Activated CD4-positive, alpha-beta T cell treated with anti-CD3 and anti-CD28 coated beads for 36 hours (primary cell): ENCODE measurements at regions of chr12 and their contacts with region 1.

Region 1: DNA sequence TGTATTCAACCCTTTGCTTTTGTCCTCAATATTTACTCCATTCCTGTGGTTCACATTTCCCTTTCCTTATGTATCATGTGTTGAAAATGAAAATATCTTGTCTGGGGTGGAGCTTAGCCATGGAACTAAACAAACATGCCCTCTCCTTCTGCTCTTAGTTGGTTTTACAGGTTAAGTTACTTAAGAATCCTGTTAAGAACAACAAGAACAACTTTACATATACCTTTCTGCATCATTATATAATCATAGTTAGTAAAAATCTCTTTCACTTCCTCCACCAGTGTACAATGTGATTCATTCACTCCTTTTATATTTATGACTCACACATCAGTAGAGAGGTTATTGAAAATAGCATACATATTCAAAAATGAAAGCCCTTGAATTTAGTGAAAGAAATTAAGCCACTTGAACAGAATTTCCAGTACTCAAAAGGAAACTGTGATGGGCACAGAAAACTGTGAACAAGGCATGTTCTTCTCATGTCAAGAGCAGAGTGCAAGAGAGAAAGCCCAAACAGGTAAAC is 307.7 kb downstream of the CCDC91 start:
- DNase-seq: peak; percentile 4
- ATAC-seq: peak; percentile 96
- H3K4me3 Mint-ChIP-seq: no peak overlapping the region
- H3K27ac Mint-ChIP-seq: no peak overlapping the region
- H3K4me1 Mint-ChIP-seq: peaks cover 16% of the 10 kb centered on the region
- H3K27me3 Mint-ChIP-seq: no peaks in the 10 kb centered on the region

Region 2: GRCh38 chr12:28223025-28223554 is 274.9 kb before region 1 on chr12:
- CTCF ChIA-PET with region 1: no interaction called
- POLR2A ChIA-PET with region 1: no interaction called
- intact Hi-C with region 1: loop called in 1 of 2 experiments (anchors 5 kb)
- DNase-seq: peak; percentile 25
- ATAC-seq: peak; percentile 94
- H3K4me3 Mint-ChIP-seq: peak overlapping the region; percentile 29
- H3K27ac Mint-ChIP-seq: peak overlapping the region; percentile 77
- H3K4me1 Mint-ChIP-seq: peaks cover 48% of the 10 kb centered on the region
- H3K27me3 Mint-ChIP-seq: no peaks in the 10 kb centered on the region

Region 3: DNA sequence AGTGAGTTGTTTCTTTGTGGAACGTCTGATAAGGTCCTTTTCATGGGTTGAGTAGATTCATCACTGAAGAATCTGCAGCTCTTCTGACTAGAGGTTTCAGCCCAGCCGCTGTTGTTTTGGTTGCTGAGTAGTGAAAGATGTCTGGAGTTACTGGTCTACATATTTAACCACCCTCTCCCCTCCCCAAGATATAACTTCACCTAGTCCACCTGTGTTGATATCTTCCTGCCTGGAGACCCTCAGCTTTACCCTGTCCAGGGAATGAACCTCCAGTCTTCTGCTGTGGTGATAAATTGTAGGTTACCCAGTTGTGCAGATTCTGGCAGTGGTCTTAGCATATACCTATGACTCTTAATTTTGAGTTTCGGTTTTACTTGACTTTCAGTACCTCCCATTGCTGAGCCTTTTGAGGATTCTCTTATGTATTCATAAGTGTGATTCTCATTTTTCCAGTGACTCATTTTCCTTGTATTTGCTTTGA is 244.7 kb before region 1 on chr12:
- CTCF ChIA-PET with region 1: no interaction called
- POLR2A ChIA-PET with region 1: no interaction called
- intact Hi-C with region 1: loop called (anchors 1 to 2 kb)
- DNase-seq: peak; percentile 72
- ATAC-seq: peak; percentile 95
- H3K4me3 Mint-ChIP-seq: peak overlapping the region; percentile 34
- H3K27ac Mint-ChIP-seq: peak overlapping the region; percentile 87
- H3K4me1 Mint-ChIP-seq: peaks cover 69% of the 10 kb centered on the region
- H3K27me3 Mint-ChIP-seq: no peaks in the 10 kb centered on the region

Region 4: GRCh38 chr12:28535216-28535615 is 37.3 kb after region 1 on chr12:
- CTCF ChIA-PET with region 1: no interaction called
- POLR2A ChIA-PET with region 1: no interaction called
- intact Hi-C with region 1: loop called (anchors 1 kb)
- DNase-seq: no peak
- ATAC-seq: no peak
- H3K4me3 Mint-ChIP-seq: no peak overlapping the region
- H3K27ac Mint-ChIP-seq: peak overlapping the region; percentile 19
- H3K4me1 Mint-ChIP-seq: peaks cover 7% of the 10 kb centered on the region
- H3K27me3 Mint-ChIP-seq: no peaks in the 10 kb centered on the region